CD4-positive, alpha-beta memory T cell (primary cell): ENCODE measurements at regions of chr2 and their contacts with region 1.

Region 1: DNA sequence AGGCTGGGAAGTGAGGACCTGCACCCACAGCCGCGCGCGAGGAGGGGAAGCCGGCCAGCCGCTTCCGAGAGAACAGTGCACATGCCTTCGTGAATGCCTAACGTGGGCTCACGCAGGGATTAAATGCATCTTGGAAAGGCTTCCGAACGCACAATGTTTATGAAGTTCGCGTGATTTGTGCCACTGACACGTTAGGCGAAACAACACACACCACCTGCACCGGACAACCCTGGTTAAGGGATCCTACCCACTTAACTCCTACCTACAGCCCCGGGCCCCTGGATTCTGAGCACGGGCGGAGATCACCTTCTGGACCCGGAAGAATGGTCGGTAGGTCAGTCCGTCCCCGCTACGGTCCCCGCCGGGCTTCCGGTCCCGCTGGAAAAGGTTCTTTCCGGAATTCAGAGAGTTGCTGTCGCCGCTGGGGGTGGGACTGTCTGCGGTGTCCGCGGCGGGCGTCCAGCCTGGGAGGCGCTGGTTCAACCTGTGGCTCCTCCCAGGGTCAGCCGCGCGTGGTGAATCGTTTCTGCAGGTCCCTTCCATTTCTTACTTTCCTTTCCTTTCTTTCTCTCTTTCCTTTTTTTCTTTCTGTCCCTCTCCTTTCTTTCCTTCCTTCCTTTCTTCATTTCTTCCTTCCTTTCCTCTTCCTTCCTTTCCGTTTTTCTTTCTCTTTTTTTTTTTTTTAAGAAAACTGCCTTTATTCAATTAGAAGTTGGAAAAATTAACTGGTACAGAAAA is at the start of gene MTIF2:
- DNase-seq: peak; percentile 79 to 87 (median 80)
- H3K4me3 ChIP-seq: peak within 1 kb of the TSS; percentile 71 to 74
- H3K4me3 Mint-ChIP-seq: peak within 1 kb of the TSS; percentile 86 to 98 (median 96)
- H3K27ac ChIP-seq: peak within 1 kb of the TSS; percentile 67
- H3K27ac Mint-ChIP-seq: peak within 1 kb of the TSS; percentile 86 to 98 (median 97)
- H3K4me1 ChIP-seq: peaks cover 21% of the 10 kb centered on the region
- H3K4me1 Mint-ChIP-seq: peaks cover 11 to 37% (median 20%) of the 10 kb centered on the region in 4 donors
- H3K27me3 ChIP-seq: no peaks in the 10 kb centered on the region
- H3K27me3 Mint-ChIP-seq: no peaks in the 10 kb centered on the region
- total RNA-seq, gene MTIF2: 33.1 to 38.6 TPM

Region 2: DNA sequence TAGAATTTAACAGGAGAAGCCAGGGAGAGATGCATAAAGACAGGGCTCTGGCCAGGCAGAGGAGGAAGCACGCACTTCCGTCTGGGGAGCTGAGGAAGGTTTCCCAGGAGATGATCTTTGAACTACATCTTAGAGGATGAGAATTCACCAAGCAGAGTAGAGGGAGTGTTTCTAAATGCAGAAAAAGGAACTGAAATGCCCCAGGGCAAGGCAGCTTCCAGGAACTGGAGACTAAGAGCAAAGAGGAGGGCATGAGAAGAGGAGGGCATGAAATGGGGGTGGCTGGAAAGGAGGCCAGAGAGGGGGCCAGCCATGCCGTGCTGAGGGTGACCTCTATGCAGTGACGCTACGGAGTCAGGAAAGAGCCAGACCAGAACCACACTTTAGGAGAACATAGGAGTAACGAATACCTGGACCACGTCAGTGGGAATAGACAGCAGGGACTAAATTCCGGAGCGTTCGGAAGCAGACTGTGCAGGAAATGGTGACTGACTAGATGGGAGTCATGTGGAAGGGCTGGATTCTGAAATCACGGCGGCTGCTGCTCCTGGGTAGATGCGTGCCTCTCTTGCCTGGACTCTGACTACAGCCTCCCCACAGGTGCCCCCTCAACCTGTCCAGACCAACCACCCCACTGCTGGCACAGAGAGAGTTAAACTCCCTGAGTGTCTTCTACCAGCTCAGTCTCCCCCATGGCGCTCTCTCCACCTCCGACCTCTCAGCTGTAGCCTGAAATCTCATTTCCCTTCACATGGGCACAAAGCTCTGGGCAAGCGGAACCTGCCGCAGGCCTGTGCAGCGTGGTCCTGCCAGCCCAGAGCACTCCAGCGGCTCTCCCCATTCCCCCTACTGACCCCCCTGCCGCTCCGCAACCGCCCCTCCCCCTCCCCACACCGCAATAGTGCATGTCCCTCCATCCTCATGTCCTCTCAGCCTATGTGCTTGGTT is 131.8 kb before region 1 on chr2:
- CTCF ChIA-PET with region 1: no interaction called
- POLR2A ChIA-PET with region 1: no interaction called
- intact Hi-C with region 1: no loop called
- DNase-seq: no peak
- H3K4me3 ChIP-seq: no peak overlapping the region
- H3K4me3 Mint-ChIP-seq: no peak overlapping the region
- H3K27ac ChIP-seq: no peak overlapping the region
- H3K27ac Mint-ChIP-seq: peak overlapping the region in 3 of 7 donors; percentile 1 to 75 (median 43)
- H3K4me1 ChIP-seq: peaks cover 36% of the 10 kb centered on the region
- H3K4me1 Mint-ChIP-seq: peaks cover 21 to 48% (median 31%) of the 10 kb centered on the region in 4 donors
- H3K27me3 ChIP-seq: no peaks in the 10 kb centered on the region
- H3K27me3 Mint-ChIP-seq: no peaks in the 10 kb centered on the region

Region 3: GRCh38 chr2:55282110-55282917 is 13.2 kb after region 1 on chr2:
- CTCF ChIA-PET with region 1: interaction called, 3 read pairs
- POLR2A ChIA-PET with region 1: interaction called, 11 read pairs
- intact Hi-C with region 1: loop called (anchors 1 kb)
- DNase-seq: peak; percentile 86 to 87 (median 86)
- H3K4me3 ChIP-seq: peak overlapping the region; percentile 26 to 90
- H3K4me3 Mint-ChIP-seq: peak overlapping the region; percentile 92 to 96 (median 94)
- H3K27ac ChIP-seq: peak overlapping the region; percentile 62
- H3K27ac Mint-ChIP-seq: peak overlapping the region; percentile 93 to 99 (median 98)
- H3K4me1 ChIP-seq: peaks cover 18% of the 10 kb centered on the region
- H3K4me1 Mint-ChIP-seq: peaks cover 13 to 38% (median 26%) of the 10 kb centered on the region in 4 donors
- H3K27me3 ChIP-seq: no peaks in the 10 kb centered on the region
- H3K27me3 Mint-ChIP-seq: no peaks in the 10 kb centered on the region

Region 4: GRCh38 chr2:55431982-55432627 is 163.0 kb after region 1 on chr2:
- CTCF ChIA-PET with region 1: no interaction called
- POLR2A ChIA-PET with region 1: no interaction called
- intact Hi-C with region 1: loop called (anchors 2 kb)
- DNase-seq: peak in 4 of 5 donors; percentile 27 to 45 (median 35)
- H3K4me3 ChIP-seq: no peak overlapping the region
- H3K4me3 Mint-ChIP-seq: no peak overlapping the region
- H3K27ac ChIP-seq: no peak overlapping the region
- H3K27ac Mint-ChIP-seq: peak overlapping the region in 1 of 7 donors; percentile 48
- H3K4me1 ChIP-seq: no peaks in the 10 kb centered on the region
- H3K4me1 Mint-ChIP-seq: peaks cover 0 to 5% (median 2%) of the 10 kb centered on the region in 4 donors
- H3K27me3 ChIP-seq: no peaks in the 10 kb centered on the region
- H3K27me3 Mint-ChIP-seq: peaks cover 0 to 3% of the 10 kb centered on the region in 2 donors